CD8-positive, alpha-beta T cell (primary cell): ENCODE measurements at regions of chr7 and their contacts with region 1.

Region 1: DNA sequence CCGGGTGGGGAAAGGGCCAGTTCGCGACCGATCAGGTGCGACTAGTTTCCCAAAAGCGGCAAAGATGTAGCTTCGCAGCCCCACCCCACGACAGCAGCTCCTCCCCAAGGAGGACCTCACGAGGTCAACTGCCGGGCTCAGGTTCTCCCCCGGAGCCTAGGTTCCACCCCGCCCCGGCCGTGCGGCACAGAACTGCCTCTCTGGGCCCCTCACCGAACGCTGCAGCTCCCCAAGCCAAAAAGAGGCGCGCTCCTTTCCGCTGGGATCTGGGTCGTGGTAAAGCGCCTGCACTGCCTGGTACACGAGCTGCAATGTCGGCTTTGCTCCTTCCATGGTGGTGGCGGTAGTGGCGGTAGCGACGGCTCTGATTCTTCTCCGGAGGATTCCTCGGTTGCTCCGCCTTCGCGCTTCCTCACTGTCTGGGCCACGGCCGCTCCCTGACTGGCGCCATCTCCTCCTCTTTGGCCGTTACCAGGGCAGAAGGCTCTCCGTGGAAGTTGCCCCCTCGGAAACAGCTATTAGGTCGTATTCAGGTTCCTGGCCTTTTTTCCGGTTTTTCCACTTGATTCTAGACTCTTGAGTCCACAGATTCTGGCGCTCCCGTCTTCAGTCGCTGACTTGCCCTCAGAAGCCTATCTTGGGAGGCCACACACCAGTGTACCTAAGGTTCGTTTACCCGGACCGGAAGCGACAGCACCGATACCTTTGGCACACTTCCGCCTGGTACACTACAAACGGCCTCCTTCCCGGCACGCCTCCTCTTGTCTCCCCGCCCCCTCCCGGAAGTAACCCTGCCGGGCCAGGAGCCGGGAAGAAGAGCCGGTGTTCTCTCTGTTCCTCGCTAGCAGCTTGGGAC is at the start of gene TNPO3:
- DNase-seq: peak; percentile 77 to 94 (median 90)
- ATAC-seq: peak; percentile 86
- H3K4me3 ChIP-seq: peak within 1 kb of the TSS; percentile 80 to 89
- H3K4me3 Mint-ChIP-seq: peak within 1 kb of the TSS; percentile 96
- H3K27ac ChIP-seq: peak within 1 kb of the TSS; percentile 84 to 93
- H3K27ac Mint-ChIP-seq: peak within 1 kb of the TSS; percentile 98
- H3K4me1 ChIP-seq: peaks cover 29% of the 10 kb centered on the region
- H3K4me1 Mint-ChIP-seq: peaks cover 38% of the 10 kb centered on the region
- H3K27me3 ChIP-seq: no peaks in the 10 kb centered on the region
- H3K27me3 Mint-ChIP-seq: peaks cover 3% of the 10 kb centered on the region
- CTCF ChIP-seq: no peak
- total RNA-seq, gene TNPO3: 17.0 to 17.2 TPM

Region 2: DNA sequence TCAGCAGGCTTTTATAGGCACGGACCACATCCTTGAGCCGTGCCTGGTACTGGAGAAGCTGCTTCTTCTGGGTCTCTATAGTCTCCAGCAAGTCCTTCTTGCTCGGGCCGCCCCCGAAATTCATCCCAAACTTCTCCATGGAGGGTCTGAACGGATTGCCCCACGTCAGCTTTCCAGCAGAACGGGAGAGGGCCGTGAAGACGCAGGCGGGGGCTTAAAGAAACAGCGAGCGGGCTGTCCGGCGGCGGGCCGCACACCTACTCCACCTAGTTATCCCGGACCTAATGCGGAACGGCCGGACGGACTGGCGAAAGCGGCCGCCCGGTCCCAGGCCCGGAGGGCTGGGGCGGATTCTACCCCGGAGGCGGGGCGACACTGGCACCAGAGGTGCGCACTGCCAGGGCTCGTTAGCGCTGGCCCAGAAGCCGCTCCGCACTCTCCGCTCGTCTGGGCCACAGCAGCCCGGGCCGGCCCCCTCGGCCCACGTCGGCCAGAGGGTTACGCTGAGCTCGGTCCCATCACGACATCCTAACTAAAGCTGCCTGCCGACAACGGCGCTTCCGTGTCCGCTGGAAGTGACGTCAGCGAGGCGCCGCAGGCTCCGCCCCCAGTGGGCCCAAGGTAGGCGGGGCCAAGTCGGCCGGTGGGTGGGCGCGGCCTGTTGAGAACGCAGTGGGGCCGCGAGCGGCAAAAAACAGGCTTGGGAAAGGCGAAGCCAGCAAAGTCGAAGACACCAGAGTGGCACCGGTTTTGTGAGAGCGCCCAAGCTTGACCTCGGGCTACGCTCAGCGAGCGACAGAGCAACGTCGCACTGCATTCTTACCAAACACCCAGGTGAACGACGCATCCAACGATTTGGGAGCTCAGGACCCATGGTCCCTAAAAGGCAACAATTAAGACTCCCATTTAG is 1469.4 kb before region 1 on chr7 and contains the start of gene GCC1:
- CTCF ChIA-PET with region 1: no interaction called
- POLR2A ChIA-PET with region 1: no interaction called
- intact Hi-C with region 1: loop called in 1 of 2 experiments (anchors 10 kb)
- DNase-seq: peak; percentile 89 to 98 (median 94)
- ATAC-seq: peak; percentile 83
- H3K4me3 ChIP-seq: peak within 1 kb of the TSS; percentile 91 to 99
- H3K4me3 Mint-ChIP-seq: peak within 1 kb of the TSS; percentile 92
- H3K27ac ChIP-seq: peak within 1 kb of the TSS; percentile 94 to 95
- H3K27ac Mint-ChIP-seq: peak within 1 kb of the TSS; percentile 93
- H3K4me1 ChIP-seq: peaks cover 71% of the 10 kb centered on the region
- H3K4me1 Mint-ChIP-seq: peaks cover 79% of the 10 kb centered on the region
- H3K27me3 ChIP-seq: no peaks in the 10 kb centered on the region
- H3K27me3 Mint-ChIP-seq: no peaks in the 10 kb centered on the region
- CTCF ChIP-seq: no peak
- total RNA-seq, gene GCC1: 33.8 to 36.6 TPM

Region 3: DNA sequence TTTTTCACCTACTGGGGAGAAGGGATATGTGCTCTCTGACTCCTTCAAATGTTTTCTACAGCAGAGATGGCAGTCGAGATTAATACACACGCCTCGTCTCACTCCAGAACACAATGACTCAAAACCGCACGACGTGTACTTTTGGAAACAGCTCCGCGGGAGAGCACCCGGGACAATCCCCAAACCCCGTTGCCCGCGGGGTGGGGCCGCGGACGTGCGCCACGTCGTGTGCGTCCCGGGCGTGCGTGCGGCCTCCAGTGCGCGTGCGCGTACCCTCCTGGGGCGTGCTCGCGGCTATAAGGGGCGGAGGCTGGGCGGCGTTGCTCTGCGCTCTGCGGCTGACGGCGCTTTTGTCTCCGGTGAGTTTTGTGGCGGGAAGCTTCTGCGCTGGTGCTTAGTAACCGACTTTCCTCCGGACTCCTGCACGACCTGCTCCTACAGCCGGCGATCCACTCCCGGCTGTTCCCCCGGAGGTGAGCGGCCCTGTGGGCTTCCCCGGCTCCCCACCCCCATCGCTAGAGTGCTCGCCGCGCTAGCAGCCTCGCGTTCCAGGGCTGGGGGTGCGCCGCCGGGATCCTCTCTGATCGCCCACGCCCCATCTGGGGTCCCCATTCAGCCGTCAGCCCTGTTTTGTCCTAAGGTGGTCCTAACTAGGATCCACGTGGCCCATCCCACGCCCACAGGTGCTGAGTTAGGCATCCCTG is 599.0 kb before region 1 on chr7 and contains the start of gene HILPDA:
- CTCF ChIA-PET with region 1: no interaction called
- POLR2A ChIA-PET with region 1: no interaction called
- intact Hi-C with region 1: loop called in 1 of 2 experiments (anchors 10 kb)
- DNase-seq: peak; percentile 84 to 98 (median 93)
- ATAC-seq: peak; percentile 92
- H3K4me3 ChIP-seq: peak within 1 kb of the TSS; percentile 83 to 91
- H3K4me3 Mint-ChIP-seq: peak within 1 kb of the TSS; percentile 95
- H3K27ac ChIP-seq: peak within 1 kb of the TSS; percentile 60 to 73
- H3K27ac Mint-ChIP-seq: peak within 1 kb of the TSS; percentile 98
- H3K4me1 ChIP-seq: peaks cover 19% of the 10 kb centered on the region
- H3K4me1 Mint-ChIP-seq: peaks cover 26% of the 10 kb centered on the region
- H3K27me3 ChIP-seq: no peaks in the 10 kb centered on the region
- H3K27me3 Mint-ChIP-seq: no peaks in the 10 kb centered on the region
- CTCF ChIP-seq: no peak
- total RNA-seq, gene HILPDA: 1.3 to 2.0 TPM

Region 4: GRCh38 chr7:128791121-128791961 is 263.3 kb before region 1 on chr7:
- CTCF ChIA-PET with region 1: no interaction called
- POLR2A ChIA-PET with region 1: no interaction called
- intact Hi-C with region 1: loop called in 1 of 2 experiments (anchors 10 kb)
- DNase-seq: peak; percentile 40 to 89 (median 79)
- ATAC-seq: peak; percentile 95
- H3K4me3 ChIP-seq: peak overlapping the region; percentile 71 to 89
- H3K4me3 Mint-ChIP-seq: peak overlapping the region; percentile 84
- H3K27ac ChIP-seq: peak overlapping the region in 1 of 2 experiments; percentile 19
- H3K27ac Mint-ChIP-seq: no peak overlapping the region
- H3K4me1 ChIP-seq: peaks cover 9% of the 10 kb centered on the region
- H3K4me1 Mint-ChIP-seq: peaks cover 20% of the 10 kb centered on the region
- H3K27me3 ChIP-seq: no peaks in the 10 kb centered on the region
- H3K27me3 Mint-ChIP-seq: no peaks in the 10 kb centered on the region
- CTCF ChIP-seq: no peak

Region 5: DNA sequence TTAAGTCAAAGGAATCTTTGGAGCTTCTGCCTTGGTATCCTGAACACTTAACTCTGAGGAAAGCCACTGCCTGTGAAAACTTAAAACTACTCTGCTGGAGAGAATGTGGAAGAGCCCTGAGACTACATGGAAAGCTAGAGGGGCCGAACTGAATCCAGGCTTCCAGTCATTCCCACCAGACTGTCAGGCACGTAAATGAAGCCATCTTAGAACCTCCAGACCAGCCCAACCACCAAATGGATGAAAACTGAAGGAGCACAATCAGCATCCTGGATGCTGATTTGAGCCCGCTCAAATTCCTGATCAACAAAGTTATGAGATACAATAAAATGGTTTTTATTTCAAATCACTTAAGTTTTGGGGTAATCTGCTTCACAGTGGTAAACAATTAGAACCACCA is 30.5 kb before region 1 on chr7:
- CTCF ChIA-PET with region 1: no interaction called
- POLR2A ChIA-PET with region 1: no interaction called
- intact Hi-C with region 1: no loop called
- DNase-seq: no peak
- ATAC-seq: no peak
- H3K4me3 ChIP-seq: no peak overlapping the region
- H3K4me3 Mint-ChIP-seq: no peak overlapping the region
- H3K27ac ChIP-seq: no peak overlapping the region
- H3K27ac Mint-ChIP-seq: no peak overlapping the region
- H3K4me1 ChIP-seq: peaks cover 5% of the 10 kb centered on the region
- H3K4me1 Mint-ChIP-seq: peaks cover 47% of the 10 kb centered on the region
- H3K27me3 ChIP-seq: no peaks in the 10 kb centered on the region
- H3K27me3 Mint-ChIP-seq: no peaks in the 10 kb centered on the region
- CTCF ChIP-seq: no peak

Region 6: DNA sequence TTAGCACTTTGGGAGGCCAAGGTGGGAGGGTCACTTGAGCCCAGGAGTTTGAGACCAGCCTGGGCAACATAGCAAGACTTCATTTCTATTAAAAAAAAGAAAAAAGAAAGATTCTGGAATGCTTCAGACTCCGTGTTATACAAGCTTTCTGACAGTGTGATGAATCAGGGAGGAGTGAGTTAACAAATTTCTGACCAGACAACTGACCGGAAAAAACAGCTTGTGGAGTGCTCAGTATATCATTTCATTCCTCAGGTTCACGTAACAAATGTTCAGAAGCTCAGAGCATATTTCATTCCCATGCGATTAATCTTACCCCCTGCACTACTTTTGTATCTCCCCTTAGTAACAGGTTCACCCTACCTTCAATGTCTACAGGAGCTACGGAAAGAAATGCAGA is 28.9 kb after region 1 on chr7:
- CTCF ChIA-PET with region 1: no interaction called
- POLR2A ChIA-PET with region 1: no interaction called
- intact Hi-C with region 1: no loop called
- DNase-seq: no peak
- ATAC-seq: no peak
- H3K4me3 ChIP-seq: no peak overlapping the region
- H3K4me3 Mint-ChIP-seq: no peak overlapping the region
- H3K27ac ChIP-seq: no peak overlapping the region
- H3K27ac Mint-ChIP-seq: no peak overlapping the region
- H3K4me1 ChIP-seq: no peaks in the 10 kb centered on the region
- H3K4me1 Mint-ChIP-seq: no peaks in the 10 kb centered on the region
- H3K27me3 ChIP-seq: no peaks in the 10 kb centered on the region
- H3K27me3 Mint-ChIP-seq: peaks cover 4% of the 10 kb centered on the region
- CTCF ChIP-seq: no peak

Region 7: DNA sequence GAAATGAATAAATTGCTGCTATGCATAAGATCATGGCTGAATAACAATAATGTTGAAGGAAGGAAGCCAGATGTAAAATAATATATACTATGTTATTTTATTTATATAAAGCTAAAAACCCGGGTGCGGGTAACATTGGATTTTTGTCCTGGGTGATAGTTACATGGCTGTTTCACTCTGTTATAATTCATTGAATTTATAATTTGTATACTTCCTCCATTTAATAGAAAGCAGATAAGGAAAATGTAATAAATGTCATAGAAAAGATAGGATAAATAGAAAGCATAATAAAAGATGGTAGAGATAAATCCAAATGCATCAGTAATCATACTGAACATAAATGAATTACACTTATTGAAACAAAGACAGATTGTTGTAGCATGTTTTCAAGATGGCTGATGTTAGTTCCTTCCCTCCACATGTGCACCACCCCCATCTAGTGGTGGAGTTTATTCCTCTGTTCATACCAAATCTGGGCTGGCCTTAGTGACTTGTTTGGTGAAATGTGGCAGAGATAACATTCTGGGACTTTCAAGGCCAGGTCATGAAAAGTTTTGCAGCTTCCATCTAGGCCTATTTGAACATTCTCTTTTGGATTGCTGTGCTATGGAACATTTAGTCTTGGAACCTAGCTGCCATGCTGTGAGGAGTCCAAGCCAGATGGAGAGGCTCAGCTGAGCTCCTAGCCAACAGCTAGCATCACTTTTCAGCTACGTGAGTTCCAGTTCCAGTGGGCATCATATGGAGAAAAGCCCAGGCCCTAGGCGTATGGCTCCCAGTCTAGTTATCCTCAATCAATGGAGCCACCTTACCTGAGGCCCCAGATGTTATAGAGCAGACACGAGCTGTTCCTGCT is 217.1 kb after region 1 on chr7:
- CTCF ChIA-PET with region 1: no interaction called
- POLR2A ChIA-PET with region 1: no interaction called
- intact Hi-C with region 1: no loop called
- DNase-seq: peak; percentile 35 to 86 (median 67)
- ATAC-seq: peak; percentile 100
- H3K4me3 ChIP-seq: no peak overlapping the region
- H3K4me3 Mint-ChIP-seq: peak overlapping the region; percentile 72
- H3K27ac ChIP-seq: no peak overlapping the region
- H3K27ac Mint-ChIP-seq: no peak overlapping the region
- H3K4me1 ChIP-seq: no peaks in the 10 kb centered on the region
- H3K4me1 Mint-ChIP-seq: peaks cover 6% of the 10 kb centered on the region
- H3K27me3 ChIP-seq: no peaks in the 10 kb centered on the region
- H3K27me3 Mint-ChIP-seq: no peaks in the 10 kb centered on the region
- CTCF ChIP-seq: peak; percentile 78

Region 8: DNA sequence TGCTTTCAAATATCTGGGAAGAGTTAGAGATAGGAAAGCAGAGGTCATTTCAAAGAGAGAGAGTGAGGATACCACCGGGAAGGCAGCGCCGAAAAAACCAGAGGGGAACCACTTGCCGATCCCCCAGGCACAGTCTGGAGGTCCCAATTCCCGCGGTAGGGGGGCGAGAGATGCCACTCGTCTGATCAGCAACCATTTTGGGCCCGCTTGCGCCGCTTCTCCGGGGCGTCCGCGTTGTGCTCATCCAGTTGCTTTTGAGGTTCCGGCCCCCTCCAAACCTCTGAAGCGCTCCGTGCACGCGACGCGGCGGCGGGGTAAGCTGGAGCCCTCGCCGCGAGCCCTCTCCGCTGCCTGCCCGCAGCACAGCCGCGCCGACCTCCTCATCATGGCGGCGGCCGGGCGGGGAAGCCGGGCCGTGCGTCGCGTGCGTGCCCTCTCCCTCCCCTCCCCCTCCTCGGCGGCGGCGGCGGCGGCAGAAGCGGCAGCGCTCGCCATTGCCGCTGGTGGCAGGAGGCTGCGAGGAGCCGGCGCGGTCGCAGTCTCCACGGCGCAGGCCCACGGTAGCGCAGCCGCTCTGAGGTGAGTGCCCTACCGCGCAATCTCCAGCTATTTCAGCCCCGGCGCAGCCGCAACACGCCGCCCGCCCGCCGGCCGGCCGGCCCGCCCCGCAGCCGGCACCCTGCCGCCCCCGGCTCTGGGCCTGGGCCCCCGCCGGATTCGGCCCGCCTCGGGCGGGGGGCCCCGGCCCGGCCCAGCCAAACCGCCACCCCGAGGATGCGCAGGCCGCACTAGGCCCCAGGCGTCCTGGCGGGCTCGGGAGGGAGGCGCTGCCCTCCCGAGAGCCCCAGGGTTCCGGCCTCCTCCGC is 556.8 kb after region 1 on chr7 and contains the start of gene NRF1:
- CTCF ChIA-PET with region 1: no interaction called
- POLR2A ChIA-PET with region 1: no interaction called
- intact Hi-C with region 1: loop called (anchors 5 to 10 kb)
- DNase-seq: peak; percentile 82 to 97 (median 91)
- ATAC-seq: peak; percentile 87
- H3K4me3 ChIP-seq: peak within 1 kb of the TSS; percentile 87 to 91
- H3K4me3 Mint-ChIP-seq: peak within 1 kb of the TSS; percentile 97
- H3K27ac ChIP-seq: peak within 1 kb of the TSS; percentile 68 to 85
- H3K27ac Mint-ChIP-seq: peak within 1 kb of the TSS; percentile 96
- H3K4me1 ChIP-seq: peaks cover 40% of the 10 kb centered on the region
- H3K4me1 Mint-ChIP-seq: peaks cover 67% of the 10 kb centered on the region
- H3K27me3 ChIP-seq: no peaks in the 10 kb centered on the region
- H3K27me3 Mint-ChIP-seq: no peaks in the 10 kb centered on the region
- CTCF ChIP-seq: no peak
- total RNA-seq, gene NRF1: 31.9 to 34.9 TPM